ENCODE measurements at regions of chr11 and their contacts with region 1.

Region 1: DNA sequence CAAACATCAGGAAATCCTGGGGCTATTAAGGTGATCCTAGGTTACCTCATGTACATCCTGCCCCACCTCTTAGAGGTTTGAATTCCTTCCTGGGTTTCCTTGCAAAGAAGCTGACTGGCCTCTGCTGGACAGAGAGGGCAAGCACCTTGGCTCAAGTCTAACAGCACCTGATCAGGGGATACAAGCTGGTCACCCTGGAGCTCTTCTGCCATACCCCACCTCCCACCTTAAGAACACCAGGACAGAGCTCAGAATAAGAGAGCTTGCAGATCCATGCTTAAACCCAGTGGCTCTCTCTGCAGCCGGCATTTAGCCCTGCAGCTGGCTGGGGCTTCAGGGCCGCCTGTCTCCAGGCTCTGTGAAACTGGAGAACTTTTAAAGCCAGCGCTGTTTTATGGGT is 386.6 kb upstream of the NARS2 start:
- DNase-seq: peak; percentile 62
- H3K4me3 Mint-ChIP-seq: no peak overlapping the region
- H3K27ac Mint-ChIP-seq: no peak overlapping the region
- H3K4me1 Mint-ChIP-seq: peaks cover 8% of the 10 kb centered on the region
- H3K27me3 Mint-ChIP-seq: peaks cover 17% of the 10 kb centered on the region
- CTCF ChIP-seq: peak; percentile 63

Region 2: GRCh38 chr11:78397387-78397786 is 563.9 kb before region 1 on chr11:
- CTCF ChIA-PET with region 1: no interaction called
- intact Hi-C with region 1: no loop called
- DNase-seq: no peak
- H3K4me3 Mint-ChIP-seq: no peak overlapping the region
- H3K27ac Mint-ChIP-seq: no peak overlapping the region
- H3K4me1 Mint-ChIP-seq: no peaks in the 10 kb centered on the region
- H3K27me3 Mint-ChIP-seq: no peaks in the 10 kb centered on the region
- CTCF ChIP-seq: no peak

Region 3: GRCh38 chr11:78715639-78716311 is 245.5 kb before region 1 on chr11:
- CTCF ChIA-PET with region 1: interaction called, 9 read pairs
- intact Hi-C with region 1: loop called (anchors 5 kb)
- DNase-seq: peak; percentile 79
- H3K4me3 Mint-ChIP-seq: no peak overlapping the region
- H3K27ac Mint-ChIP-seq: no peak overlapping the region
- H3K4me1 Mint-ChIP-seq: peaks cover 10% of the 10 kb centered on the region
- H3K27me3 Mint-ChIP-seq: peaks cover 89% of the 10 kb centered on the region
- CTCF ChIP-seq: peak; percentile 66

Region 4: DNA sequence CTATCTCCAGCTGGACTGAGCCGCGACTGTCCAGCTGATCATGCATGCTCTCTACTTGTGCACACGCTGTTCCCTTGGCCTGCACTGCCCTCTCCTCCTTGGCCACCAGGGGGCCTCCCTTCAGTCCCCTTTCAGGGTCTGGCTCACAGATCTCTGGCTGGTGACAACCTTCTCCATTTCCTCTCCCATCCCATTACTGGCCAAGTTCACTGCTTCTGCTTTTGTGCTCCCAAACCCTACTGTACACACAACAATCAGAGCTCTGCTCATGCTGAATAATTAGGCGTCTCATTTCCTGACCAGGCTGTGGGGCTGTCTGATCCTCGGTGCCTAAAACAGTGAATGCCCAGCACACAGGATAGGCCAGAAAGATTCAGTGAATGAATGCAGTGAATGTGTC is 162.6 kb before region 1 on chr11:
- CTCF ChIA-PET with region 1: interaction called, 39 read pairs
- intact Hi-C with region 1: loop called (anchors 1 kb)
- DNase-seq: peak; percentile 81
- H3K4me3 Mint-ChIP-seq: no peak overlapping the region
- H3K27ac Mint-ChIP-seq: no peak overlapping the region
- H3K4me1 Mint-ChIP-seq: peaks cover 13% of the 10 kb centered on the region
- H3K27me3 Mint-ChIP-seq: peaks cover 48% of the 10 kb centered on the region
- CTCF ChIP-seq: peak; percentile 83

Region 5: DNA sequence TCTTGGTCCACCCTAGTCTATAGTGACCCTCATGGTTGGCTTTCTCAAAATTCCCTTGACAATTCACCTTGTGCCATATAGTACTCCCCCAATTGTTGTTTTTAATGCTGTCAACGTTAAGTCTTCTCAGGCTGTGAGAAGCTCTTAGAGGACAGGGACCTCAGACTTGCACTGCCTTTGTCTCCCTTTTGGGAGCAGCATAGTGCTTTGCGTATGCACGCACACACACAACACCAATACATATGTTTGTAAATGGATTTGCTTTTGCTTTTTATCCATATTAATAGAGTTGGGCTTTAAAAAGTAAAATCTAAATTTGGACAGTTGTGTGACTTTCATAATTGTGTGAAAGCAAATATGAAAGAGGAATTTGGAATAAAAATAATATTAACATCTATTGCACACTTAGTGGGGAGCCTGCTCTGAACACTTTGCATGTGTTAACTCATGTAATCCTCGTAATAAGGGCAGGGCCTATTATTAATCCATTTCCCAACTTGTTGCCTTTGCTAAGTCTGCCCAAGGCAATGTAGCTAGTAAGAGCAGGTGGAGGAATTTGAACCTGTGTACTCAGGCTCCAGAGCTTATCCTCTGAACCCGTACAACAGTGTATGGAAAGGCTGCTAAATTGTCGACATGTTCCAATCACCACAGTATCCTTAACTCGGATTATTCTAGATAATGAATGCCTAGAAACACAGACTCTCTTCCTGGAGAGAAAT is 128.9 kb before region 1 on chr11:
- CTCF ChIA-PET with region 1: interaction called, 6 read pairs
- intact Hi-C with region 1: loop called (anchors 1 kb)
- DNase-seq: no peak
- H3K4me3 Mint-ChIP-seq: no peak overlapping the region
- H3K27ac Mint-ChIP-seq: no peak overlapping the region
- H3K4me1 Mint-ChIP-seq: no peaks in the 10 kb centered on the region
- H3K27me3 Mint-ChIP-seq: peaks cover 60% of the 10 kb centered on the region
- CTCF ChIP-seq: no peak

Region 6: DNA sequence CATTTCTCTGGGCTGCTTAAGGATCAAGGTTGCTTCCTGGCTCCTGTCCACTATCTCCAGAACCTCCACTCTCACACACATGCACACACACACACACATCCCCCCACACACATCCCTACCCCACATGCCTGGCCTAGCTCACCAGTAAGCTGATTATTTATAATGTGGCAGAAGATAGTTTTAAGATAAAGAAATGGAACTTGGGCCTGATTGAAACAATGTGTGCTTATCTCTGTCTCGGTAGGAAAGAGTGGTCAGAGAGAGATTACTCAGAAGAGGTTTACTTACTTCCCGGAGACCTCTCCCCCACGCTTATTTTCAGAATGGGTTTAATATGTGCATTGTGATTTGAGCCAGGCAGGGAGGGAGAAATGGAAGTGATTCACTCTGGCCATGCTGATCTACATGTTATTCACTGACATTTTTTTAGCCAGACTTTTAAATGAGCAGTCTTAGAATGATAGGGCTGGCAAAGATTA is 57.2 kb after region 1 on chr11:
- CTCF ChIA-PET with region 1: no interaction called
- intact Hi-C with region 1: no loop called
- DNase-seq: no peak
- H3K4me3 Mint-ChIP-seq: no peak overlapping the region
- H3K27ac Mint-ChIP-seq: no peak overlapping the region
- H3K4me1 Mint-ChIP-seq: no peaks in the 10 kb centered on the region
- H3K27me3 Mint-ChIP-seq: peaks cover 68% of the 10 kb centered on the region
- CTCF ChIP-seq: no peak

Region 7: DNA sequence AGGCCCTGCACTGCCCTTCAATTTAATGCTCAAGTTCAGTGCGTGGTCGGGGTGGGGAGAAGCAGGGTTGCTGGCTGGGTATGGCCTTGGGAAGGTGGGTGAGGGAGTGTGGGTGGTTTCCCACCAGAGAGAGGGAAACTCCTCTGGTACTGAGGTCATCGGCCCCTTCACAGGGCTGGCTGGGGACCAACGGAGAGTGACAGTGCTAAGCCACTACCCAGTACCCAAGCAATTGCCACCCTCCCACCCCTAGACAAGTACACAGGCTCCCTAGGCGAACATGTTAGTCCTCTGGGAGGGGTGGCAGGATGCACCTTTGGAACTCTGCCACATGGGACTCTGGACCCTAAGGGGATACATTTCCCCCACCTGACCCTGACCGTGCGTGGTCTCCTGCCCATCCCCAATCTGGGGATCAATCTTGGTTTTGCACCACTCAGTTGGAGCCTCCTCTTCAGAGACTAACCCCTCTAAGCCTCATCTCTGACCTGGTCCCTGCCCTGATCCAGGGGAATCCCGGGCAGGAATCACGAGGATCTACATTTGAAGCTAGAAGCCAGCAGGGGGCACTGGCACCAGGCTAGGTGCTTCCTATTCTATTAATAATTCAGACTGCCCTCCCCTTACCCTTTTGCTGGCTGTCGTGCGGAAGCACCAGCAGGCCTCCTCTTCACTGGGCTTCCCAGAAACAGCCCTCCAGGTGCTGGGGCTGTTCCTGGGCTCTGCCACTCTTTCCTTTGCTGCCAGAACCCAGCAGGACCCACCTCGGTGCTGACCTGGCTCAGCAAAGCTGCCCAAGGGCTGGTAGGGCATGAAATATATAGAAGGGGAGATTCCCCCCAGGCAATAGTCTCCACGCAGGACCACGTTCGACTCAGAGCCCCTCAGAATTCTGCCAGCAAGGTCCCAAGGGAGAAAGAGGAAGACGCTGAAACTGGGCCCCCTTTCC is 101.8 kb after region 1 on chr11:
- CTCF ChIA-PET with region 1: no interaction called
- intact Hi-C with region 1: no loop called
- DNase-seq: peak; percentile 25
- H3K4me3 Mint-ChIP-seq: no peak overlapping the region
- H3K27ac Mint-ChIP-seq: no peak overlapping the region
- H3K4me1 Mint-ChIP-seq: no peaks in the 10 kb centered on the region
- H3K27me3 Mint-ChIP-seq: peaks cover 55% of the 10 kb centered on the region
- CTCF ChIP-seq: no peak

Measured in Calu3 (cell line).